ENCODE measurements at regions of chr10 and their contacts with region 1.

Region 1: GRCh38 chr10:77236700-77237099 is 400.9 kb downstream of the KCNMA1 start:
- DNase-seq: no peak

Region 2: DNA sequence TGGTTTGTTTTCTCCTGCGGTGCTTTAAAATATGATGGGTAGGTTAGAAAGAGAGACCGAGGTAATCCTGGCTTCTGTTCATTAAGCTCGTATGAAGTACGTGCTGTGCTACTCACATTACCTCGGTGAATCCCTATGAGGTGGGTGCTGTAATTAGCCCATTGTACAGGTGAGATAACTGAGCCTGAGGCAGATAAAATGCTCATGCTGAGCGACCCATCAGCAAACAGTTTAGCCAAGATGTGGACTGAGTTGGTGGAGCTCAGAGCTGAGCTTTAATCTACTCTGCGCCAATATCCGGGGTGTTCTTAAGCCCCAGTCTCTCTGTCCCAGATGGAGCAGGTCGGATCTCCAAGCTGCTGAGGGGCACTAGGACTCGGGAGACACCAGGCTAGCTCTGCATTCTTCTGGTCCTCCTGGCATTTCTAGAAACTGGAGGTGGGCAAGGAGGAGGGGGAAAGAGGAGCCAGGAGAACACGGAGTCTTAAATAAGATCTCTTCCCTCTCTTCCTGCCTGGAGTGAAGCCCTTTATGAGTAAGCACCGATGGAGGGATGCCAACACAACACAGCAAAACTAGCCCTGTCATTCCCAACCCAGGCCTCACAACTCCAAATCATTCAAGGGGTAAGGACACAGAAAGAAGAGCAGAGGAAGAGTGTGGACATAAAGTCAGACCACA is 57.5 kb before region 1 on chr10:
- intact Hi-C with region 1: loop called in 1 of 2 experiments (anchors 5 kb)
- DNase-seq: no peak

Region 3: DNA sequence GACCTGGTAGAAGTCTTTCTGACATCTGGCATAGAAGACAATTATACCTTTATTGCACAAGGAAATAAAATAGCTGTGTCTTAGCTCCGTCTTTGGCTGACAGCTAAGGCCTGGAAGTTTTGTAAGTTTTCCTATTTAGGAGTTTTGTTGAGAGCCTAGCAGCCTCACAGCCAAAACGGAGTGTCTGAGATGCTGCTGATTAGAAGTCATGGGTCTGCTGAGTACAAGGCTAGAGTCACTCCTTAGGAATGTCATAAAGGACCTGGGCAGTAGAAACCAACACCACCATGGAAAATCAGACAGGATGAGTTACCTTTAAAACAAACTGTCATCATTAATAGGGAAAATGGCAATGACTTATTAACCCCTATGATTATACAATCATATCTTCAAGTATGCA is 41.6 kb before region 1 on chr10:
- intact Hi-C with region 1: loop called (anchors 5 to 10 kb)
- DNase-seq: no peak